ENCODE measurements at regions of chr2 and their contacts with region 1.

Region 1: GRCh38 chr2:44981136-44982108 is 27.8 kb downstream of the SIX2 start:
- DNase-seq: peak in 4 of 5 donors; percentile 39 to 52 (median 46)
- H3K4me3 ChIP-seq: no peak overlapping the region
- H3K4me3 Mint-ChIP-seq: no peak overlapping the region
- H3K27ac ChIP-seq: no peak overlapping the region
- H3K27ac Mint-ChIP-seq: no peak overlapping the region
- H3K4me1 ChIP-seq: no peaks in the 10 kb centered on the region
- H3K4me1 Mint-ChIP-seq: peaks cover 0 to 4% (median 2%) of the 10 kb centered on the region in 4 donors
- H3K27me3 ChIP-seq: no peaks in the 10 kb centered on the region
- H3K27me3 Mint-ChIP-seq: peaks cover 10 to 18% of the 10 kb centered on the region in 2 donors

Region 2: GRCh38 chr2:44997963-44998362 is 16.5 kb after region 1 on chr2:
- CTCF ChIA-PET with region 1: interaction called, 13 read pairs
- POLR2A ChIA-PET with region 1: no interaction called
- intact Hi-C with region 1: no loop called
- DNase-seq: no peak
- H3K4me3 ChIP-seq: no peak overlapping the region
- H3K4me3 Mint-ChIP-seq: no peak overlapping the region
- H3K27ac ChIP-seq: no peak overlapping the region
- H3K27ac Mint-ChIP-seq: no peak overlapping the region
- H3K4me1 ChIP-seq: peaks cover 12% of the 10 kb centered on the region
- H3K4me1 Mint-ChIP-seq: peaks cover 6 to 19% (median 10%) of the 10 kb centered on the region in 4 donors
- H3K27me3 ChIP-seq: peaks cover 16% of the 10 kb centered on the region
- H3K27me3 Mint-ChIP-seq: peaks cover 55 to 58% of the 10 kb centered on the region in 2 donors

Region 3: GRCh38 chr2:45578056-45578809 is 596.8 kb after region 1 on chr2:
- CTCF ChIA-PET with region 1: interaction called, 63 read pairs
- POLR2A ChIA-PET with region 1: no interaction called
- intact Hi-C with region 1: no loop called
- DNase-seq: peak in 4 of 5 donors; percentile 22 to 41 (median 32)
- H3K4me3 ChIP-seq: no peak overlapping the region
- H3K4me3 Mint-ChIP-seq: no peak overlapping the region
- H3K27ac ChIP-seq: no peak overlapping the region
- H3K27ac Mint-ChIP-seq: peak overlapping the region in 2 of 7 donors; percentile 29 to 87
- H3K4me1 ChIP-seq: no peaks in the 10 kb centered on the region
- H3K4me1 Mint-ChIP-seq: peaks cover 0 to 3% (median under 1%) of the 10 kb centered on the region in 4 donors
- H3K27me3 ChIP-seq: no peaks in the 10 kb centered on the region
- H3K27me3 Mint-ChIP-seq: no peaks in the 10 kb centered on the region